A673 (cell line): ENCODE measurements at regions of chrX and their contacts with region 1.

Region 1: DNA sequence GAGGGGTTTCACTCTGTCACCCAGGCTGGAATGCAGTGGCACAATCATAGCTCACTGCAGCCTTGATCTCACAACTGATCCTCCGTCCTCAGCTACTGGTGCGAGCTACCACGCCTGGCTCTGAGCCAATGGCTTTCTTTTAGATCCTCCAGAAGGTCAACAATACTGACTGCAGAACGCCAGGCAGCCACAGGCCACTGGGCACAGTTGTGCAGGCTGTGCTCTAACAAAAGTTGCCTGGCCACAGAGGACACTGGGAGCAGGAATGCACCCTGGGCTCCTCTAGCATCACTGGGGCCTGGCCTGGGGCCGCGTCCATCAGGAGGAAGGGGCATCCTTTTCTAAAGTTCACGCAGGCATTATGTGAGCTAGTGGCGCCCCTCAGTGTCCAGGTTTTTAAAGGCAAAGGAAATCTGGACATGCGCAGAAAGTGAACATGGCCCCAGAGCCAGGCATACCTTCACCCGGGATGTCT is 14.9 kb upstream of the PORCN start:
- DNase-seq: peak; percentile 33
- H3K4me3 ChIP-seq: no peak overlapping the region
- H3K27ac ChIP-seq: no peak overlapping the region
- H3K4me1 ChIP-seq: no peaks in the 10 kb centered on the region
- H3K27me3 ChIP-seq: no peaks in the 10 kb centered on the region
- CTCF ChIP-seq: peak; percentile 53

Region 2: GRCh38 chrX:48083212-48083611 is 410.7 kb before region 1 on chrX:
- CTCF ChIA-PET with region 1: interaction called, 12 read pairs
- POLR2A ChIA-PET with region 1: no interaction called
- intact Hi-C with region 1: loop called (anchors 10 kb)
- DNase-seq: peak; percentile 62
- H3K4me3 ChIP-seq: no peak overlapping the region
- H3K27ac ChIP-seq: no peak overlapping the region
- H3K4me1 ChIP-seq: no peaks in the 10 kb centered on the region
- H3K27me3 ChIP-seq: no peaks in the 10 kb centered on the region
- CTCF ChIP-seq: peak; percentile 66

Region 3: DNA sequence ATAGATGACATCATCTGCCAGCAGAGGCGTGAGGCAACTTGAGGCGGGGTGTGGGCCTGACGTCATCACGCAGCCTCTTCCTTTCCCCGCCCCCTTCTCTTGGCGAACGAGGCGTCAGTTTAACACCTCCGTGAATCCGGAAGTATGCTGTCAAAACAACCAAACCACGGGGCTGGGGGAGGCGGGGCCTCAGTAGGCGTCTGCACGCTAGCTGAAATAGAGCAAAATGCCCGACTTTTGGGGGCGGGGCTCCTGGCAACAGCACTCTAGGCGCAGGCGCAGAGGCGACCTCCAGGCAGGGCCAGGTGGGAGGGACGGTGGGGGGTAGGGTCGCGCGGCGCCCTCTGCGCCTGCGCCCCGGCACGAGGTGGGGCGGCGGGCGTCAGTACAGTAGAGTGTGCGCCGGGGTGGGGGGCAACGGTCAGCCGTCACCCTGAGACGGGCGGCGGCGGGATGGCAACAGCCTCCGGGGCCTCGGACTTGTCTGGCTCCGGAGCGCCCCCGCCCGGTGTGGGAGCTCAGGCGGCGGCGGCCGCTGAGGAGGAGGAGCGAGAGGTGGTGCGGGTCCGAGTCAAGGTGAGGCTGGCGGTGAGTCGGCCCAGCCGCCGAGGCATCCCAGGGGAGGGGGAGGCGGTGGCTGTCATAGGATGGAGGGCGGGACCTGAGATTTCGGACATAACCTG is 45.6 kb after region 1 on chrX and contains the start of gene TBC1D25:
- CTCF ChIA-PET with region 1: no interaction called
- POLR2A ChIA-PET with region 1: no interaction called
- intact Hi-C with region 1: no loop called
- DNase-seq: peak; percentile 97
- H3K4me3 ChIP-seq: peak within 1 kb of the TSS; percentile 71
- H3K27ac ChIP-seq: peak within 1 kb of the TSS; percentile 70
- H3K4me1 ChIP-seq: no peaks in the 10 kb centered on the region
- H3K27me3 ChIP-seq: no peaks in the 10 kb centered on the region
- CTCF ChIP-seq: peak; percentile 44
- total RNA-seq, gene TBC1D25: 10.8 and 15.0 TPM in 2 replicates